ENCODE measurements at regions of chr1 and their contacts with region 1.

Region 1: DNA sequence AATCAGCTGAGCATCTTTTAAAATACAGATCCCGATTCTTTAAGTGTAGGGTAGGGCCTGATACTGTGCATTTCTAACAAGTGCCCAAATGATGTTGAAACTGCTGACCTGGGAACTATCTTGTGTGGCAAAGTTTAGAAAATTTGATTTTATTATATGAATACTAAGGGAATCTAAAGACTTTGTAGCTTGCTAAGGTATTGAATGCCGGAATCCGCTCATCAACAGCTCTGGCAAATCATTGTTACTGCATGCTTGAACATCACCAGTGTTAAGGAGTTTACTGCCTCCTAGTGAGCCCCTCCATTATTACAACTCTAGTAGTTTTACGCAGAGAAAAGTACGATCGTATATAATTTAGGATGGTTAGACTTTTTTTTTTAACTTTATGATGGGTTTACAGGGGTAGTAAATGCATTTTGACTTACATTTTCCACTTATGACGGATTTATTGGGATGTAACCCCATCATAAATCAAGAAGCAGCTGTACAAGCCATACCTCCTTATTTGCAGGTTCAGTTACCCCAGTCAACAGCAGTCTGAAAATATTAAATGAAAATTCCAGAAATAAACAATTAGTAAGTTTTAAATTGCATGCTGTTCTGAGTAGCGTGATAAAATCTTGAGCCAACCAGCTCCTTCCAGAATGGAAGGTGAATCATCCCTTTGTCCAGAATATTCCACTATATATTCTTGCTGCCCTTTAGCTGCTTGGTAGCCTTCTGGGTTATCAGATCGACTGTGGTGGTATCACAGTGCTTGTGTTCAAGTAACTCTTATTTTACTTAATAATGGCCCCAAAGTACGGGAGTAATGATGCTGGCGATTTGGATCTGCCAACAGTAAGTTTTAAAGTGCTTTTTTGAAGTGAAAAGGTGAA is 892 bp downstream of the TYW3 start:
- DNase-seq: peak; percentile 78
- H3K4me3 Mint-ChIP-seq: peak overlapping the region; percentile 97
- H3K27ac Mint-ChIP-seq: peak overlapping the region; percentile 99
- H3K4me1 Mint-ChIP-seq: peaks cover 31% of the 10 kb centered on the region
- H3K27me3 Mint-ChIP-seq: no peaks in the 10 kb centered on the region

Region 2: DNA sequence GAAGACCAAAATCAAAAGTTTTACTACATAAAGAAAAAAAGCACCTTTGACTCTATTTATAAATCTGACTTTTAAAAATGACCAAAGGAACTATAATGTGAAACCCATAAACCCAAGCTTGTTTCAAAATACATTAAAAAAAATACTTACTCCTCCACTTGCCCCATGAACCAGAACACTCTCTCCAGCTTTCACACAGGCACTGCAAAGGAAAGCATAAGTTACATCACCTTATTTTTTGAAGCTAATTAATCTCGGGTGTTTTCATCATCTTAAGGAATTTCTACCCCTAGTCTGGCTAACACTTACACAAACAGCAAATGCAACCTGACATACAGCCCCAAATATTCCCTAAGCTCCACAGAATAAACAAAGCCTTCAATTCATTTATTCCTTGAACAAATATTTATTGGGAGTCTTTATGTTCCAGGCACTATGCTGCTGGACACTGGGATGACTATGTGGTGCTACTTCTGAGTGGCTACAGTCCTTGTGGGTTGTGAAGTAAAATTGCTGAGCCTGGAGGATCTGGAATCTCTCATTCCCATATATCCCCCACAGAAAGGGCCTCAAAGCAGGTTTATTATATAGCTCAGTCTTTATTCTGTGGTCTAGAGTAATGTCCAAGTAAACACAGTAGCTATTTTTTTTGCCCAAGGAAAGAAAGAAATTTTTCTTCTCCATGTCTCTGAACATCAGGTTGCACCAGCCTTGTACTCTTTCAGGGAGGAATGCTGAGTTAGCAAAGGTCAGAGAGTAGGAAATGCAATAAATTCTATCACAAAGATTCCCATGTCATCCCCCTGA is 19.2 kb before region 1 on chr1:
- CTCF ChIA-PET with region 1: interaction called, 5 read pairs
- POLR2A ChIA-PET with region 1: interaction called, 10 read pairs
- DNase-seq: no peak
- H3K4me3 Mint-ChIP-seq: no peak overlapping the region
- H3K27ac Mint-ChIP-seq: no peak overlapping the region
- H3K4me1 Mint-ChIP-seq: no peaks in the 10 kb centered on the region
- H3K27me3 Mint-ChIP-seq: no peaks in the 10 kb centered on the region

Region 3: DNA sequence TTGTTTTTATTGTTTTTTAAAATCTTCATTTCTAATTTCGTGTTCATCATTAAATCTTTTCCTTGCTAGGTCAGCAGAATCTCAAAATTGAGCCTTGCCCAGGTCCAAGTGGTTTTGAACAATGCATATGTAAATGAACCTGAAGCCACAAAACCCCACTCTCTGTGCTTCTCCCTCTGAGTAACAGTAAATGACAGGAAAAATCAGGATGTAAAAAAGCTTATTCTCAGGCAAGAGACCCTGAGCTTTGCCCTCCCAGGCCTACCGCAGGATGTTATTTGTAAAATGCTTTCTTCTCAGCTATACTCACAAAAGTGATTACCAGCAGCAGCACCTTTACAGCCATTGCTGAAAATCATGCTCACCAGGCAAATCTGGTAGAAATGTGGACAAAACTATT is 46.8 kb after region 1 on chr1:
- CTCF ChIA-PET with region 1: no interaction called
- POLR2A ChIA-PET with region 1: no interaction called
- DNase-seq: no peak
- H3K4me3 Mint-ChIP-seq: no peak overlapping the region
- H3K27ac Mint-ChIP-seq: no peak overlapping the region
- H3K4me1 Mint-ChIP-seq: no peaks in the 10 kb centered on the region
- H3K27me3 Mint-ChIP-seq: peaks cover 13% of the 10 kb centered on the region

Measured in activated CD4-positive, alpha-beta T cell treated with anti-CD3 and anti-CD28 coated beads, Interleukin-2, amount 10 ng/mL, durations not matched to agents 7 days and 5 days (primary cell).